Caco-2 (cell line): ENCODE measurements at regions of chrX and their contacts with region 1.

Region 1: GRCh38 chrX:22053481-22053880 is 21.4 kb downstream of the PHEX start:
- DNase-seq: no peak
- H3K4me3 ChIP-seq: no peak overlapping the region
- H3K4me3 Mint-ChIP-seq: no peak overlapping the region
- H3K27ac Mint-ChIP-seq: no peak overlapping the region
- H3K4me1 ChIP-seq: no peaks in the 10 kb centered on the region
- H3K4me1 Mint-ChIP-seq: no peaks in the 10 kb centered on the region
- H3K27me3 ChIP-seq: no peaks in the 10 kb centered on the region
- H3K27me3 Mint-ChIP-seq: no peaks in the 10 kb centered on the region
- CTCF ChIP-seq: no peak

Region 2: DNA sequence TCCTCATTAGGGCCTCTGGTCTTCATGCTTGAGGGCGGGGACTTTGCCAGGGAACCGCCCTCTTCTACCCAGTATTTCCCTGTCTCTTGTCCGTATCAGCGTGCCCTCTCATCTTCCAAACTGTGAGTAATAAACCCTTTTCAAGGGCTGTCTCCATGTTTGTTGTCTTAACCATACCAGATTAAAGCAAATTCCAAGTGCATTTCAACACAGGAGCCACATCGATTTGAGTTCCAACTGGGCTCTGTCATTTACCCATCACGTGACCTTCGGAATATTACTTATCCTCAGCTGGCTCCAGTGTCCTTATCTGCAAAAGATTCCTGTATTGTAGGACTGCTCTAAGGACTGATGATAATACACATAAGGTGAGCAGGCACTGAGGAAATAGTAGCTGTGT is 27.7 kb before region 1 on chrX:
- CTCF ChIA-PET with region 1: no interaction called
- POLR2A ChIA-PET with region 1: no interaction called
- intact Hi-C with region 1: loop called (anchors 2 kb)
- DNase-seq: peak; percentile 35 to 41
- H3K4me3 ChIP-seq: no peak overlapping the region
- H3K4me3 Mint-ChIP-seq: peak overlapping the region; percentile 58
- H3K27ac Mint-ChIP-seq: peak overlapping the region; percentile 29
- H3K4me1 ChIP-seq: peaks cover 15% of the 10 kb centered on the region
- H3K4me1 Mint-ChIP-seq: peaks cover 15% of the 10 kb centered on the region
- H3K27me3 ChIP-seq: no peaks in the 10 kb centered on the region
- H3K27me3 Mint-ChIP-seq: no peaks in the 10 kb centered on the region
- CTCF ChIP-seq: no peak

Region 3: DNA sequence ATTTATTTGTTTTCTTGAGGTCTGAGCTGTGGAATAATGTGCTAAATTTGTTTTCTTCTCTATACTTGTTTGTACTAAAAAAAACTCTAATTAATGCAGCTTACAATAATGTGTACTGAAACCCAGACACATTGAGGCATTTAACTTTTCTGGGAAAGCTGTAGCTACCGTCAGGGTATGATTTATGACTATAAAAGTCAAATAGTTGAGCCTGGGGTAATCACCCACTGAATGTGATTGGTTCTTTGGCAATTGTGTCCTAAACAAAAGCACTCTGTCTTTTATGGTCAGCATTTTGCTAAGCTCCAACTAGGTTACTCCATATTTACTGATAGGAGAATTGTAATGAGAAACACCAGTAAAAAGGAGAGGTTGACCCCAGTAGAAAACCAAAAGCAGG is 153.3 kb after region 1 on chrX:
- CTCF ChIA-PET with region 1: no interaction called
- POLR2A ChIA-PET with region 1: no interaction called
- intact Hi-C with region 1: no loop called
- DNase-seq: no peak
- H3K4me3 ChIP-seq: no peak overlapping the region
- H3K4me3 Mint-ChIP-seq: no peak overlapping the region
- H3K27ac Mint-ChIP-seq: no peak overlapping the region
- H3K4me1 ChIP-seq: no peaks in the 10 kb centered on the region
- H3K4me1 Mint-ChIP-seq: no peaks in the 10 kb centered on the region
- H3K27me3 ChIP-seq: no peaks in the 10 kb centered on the region
- H3K27me3 Mint-ChIP-seq: no peaks in the 10 kb centered on the region
- CTCF ChIP-seq: no peak